ENCODE measurements at regions of chr19 and their contacts with region 1.

Region 1: GRCh38 chr19:3557461-3558248 is at the start of gene MFSD12:
- DNase-seq: peak; percentile 93
- ATAC-seq: peak; percentile 89 to 91
- H3K4me3 ChIP-seq: peak within 1 kb of the TSS; percentile 79 to 91 (median 86)
- H3K27ac ChIP-seq: peak within 1 kb of the TSS; percentile 89 to 94 (median 90)
- H3K4me1 ChIP-seq: peaks cover 19% of the 10 kb centered on the region in 2 donors
- H3K27me3 ChIP-seq: no peaks in the 10 kb centered on the region
- CTCF ChIP-seq: no peak
- POLR2A ChIP-seq: peak; percentile 92 to 94
- total RNA-seq, gene MFSD12: 22.3 to 77.3 (median 48.7) TPM

Region 2: GRCh38 chr19:3626473-3627350 is 69.1 kb after region 1 on chr19 and contains the start of gene CACTIN:
- in situ Hi-C with region 1: no loop called
- intact Hi-C with region 1: loop called (anchors 2 kb)
- DNase-seq: peak; percentile 98 to 99
- ATAC-seq: peak; percentile 96 to 98
- H3K4me3 ChIP-seq: peak within 1 kb of the TSS; percentile 92 to 100 (median 98)
- H3K27ac ChIP-seq: peak within 1 kb of the TSS; percentile 88 to 98 (median 96)
- H3K4me1 ChIP-seq: peaks cover 19 to 21% of the 10 kb centered on the region in 2 donors
- H3K27me3 ChIP-seq: no peaks in the 10 kb centered on the region
- CTCF ChIP-seq: peak in 1 of 5 experiments; percentile 52
- POLR2A ChIP-seq: peak; percentile 81 to 85
- total RNA-seq, gene CACTIN: 19.5 to 28.4 (median 27.4) TPM

Measured in gastrocnemius medialis (tissue), 4 donors.